Naive thymus-derived CD8-positive, alpha-beta T cell (primary cell): ENCODE measurements at regions of chr3 and their contacts with region 1.

Region 1: DNA sequence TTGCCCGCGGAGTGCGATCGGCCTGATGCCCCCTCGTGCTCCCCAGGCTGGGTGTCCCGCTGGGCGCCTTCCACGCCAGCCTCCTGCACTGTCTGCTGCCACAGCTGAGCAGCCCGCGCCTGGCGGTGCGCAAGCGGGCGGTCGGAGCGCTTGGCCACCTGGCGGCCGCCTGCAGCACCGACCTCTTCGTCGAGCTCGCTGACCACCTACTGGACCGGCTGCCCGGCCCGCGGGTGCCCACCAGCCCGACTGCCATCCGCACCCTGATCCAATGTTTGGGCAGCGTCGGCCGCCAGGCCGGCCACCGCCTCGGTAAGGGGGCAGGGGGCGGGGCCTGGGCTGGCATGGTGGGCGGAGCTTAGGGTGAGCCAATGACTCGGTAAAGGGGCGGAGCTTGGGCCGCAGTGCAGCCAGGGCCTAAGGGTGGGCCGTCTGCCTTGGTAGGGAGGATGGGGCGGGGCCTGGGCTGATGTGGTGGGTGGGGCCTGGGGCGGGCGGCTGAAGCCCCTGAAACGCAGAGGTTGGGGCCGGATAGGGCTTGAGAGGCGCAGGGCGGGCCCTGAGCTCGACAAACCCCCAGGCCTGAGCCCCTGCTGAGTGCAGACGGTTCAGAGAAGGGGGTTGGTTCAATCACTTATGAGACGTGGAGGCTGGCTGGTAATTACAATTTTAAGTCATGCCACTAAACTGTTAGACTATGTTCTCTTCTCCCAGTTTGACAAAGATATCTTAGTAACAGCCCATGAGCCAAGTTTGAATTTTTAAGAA is 13.7 kb downstream of the CAND2 start:
- DNase-seq: peak; percentile 92 to 99 (median 98)
- ATAC-seq: peak; percentile 96 to 97
- H3K4me3 Mint-ChIP-seq: peak overlapping the region; percentile 65 to 84 (median 68)
- H3K27ac Mint-ChIP-seq: peak overlapping the region in 9 of 10 donors; percentile 25 to 92 (median 90)
- H3K4me1 Mint-ChIP-seq: peaks cover 4 to 22% (median 10%) of the 10 kb centered on the region in 4 donors
- H3K27me3 Mint-ChIP-seq: no peaks in the 10 kb centered on the region

Region 2: GRCh38 chr3:12175844-12176453 is 634.2 kb before region 1 on chr3:
- POLR2A ChIA-PET with region 1: no interaction called
- DNase-seq: peak in 1 of 10 donors; percentile 6
- ATAC-seq: no peak
- H3K4me3 Mint-ChIP-seq: no peak overlapping the region
- H3K27ac Mint-ChIP-seq: no peak overlapping the region
- H3K4me1 Mint-ChIP-seq: peaks cover 0 to 2% (median 0%) of the 10 kb centered on the region in 4 donors
- H3K27me3 Mint-ChIP-seq: no peaks in the 10 kb centered on the region

Region 3: DNA sequence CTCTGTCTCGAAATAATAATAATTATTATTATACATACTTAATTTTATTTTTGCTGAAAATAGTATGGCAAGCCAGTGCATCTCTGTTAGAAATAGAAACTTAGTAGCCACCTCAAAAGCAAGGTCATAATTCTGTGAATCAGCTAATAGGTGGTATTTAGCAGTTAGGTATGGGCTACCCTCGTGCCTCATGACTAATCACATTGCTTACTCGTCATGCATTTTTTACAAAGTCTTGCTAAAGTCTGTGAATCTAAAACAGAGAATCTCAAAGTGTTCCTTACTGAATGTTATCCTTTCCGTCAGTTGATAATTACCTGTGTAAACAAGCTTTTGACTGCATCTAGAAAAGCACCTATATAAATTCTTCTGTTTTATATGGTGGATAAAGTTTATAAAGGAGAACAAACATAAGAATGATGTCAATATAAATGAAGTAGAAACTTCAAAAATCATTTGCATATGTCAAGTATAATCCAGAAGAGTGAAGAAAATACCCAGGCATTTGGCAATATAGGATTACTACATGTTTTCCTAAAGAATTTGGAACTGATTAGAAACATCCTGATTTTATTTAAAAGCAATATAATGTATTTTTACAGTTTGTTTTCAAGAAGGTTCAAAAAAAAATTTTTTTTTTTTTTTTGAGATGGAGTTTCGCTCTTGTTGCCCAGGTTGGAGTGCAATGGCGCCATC is 515.2 kb before region 1 on chr3:
- POLR2A ChIA-PET with region 1: no interaction called
- DNase-seq: no peak
- ATAC-seq: no peak
- H3K4me3 Mint-ChIP-seq: no peak overlapping the region
- H3K27ac Mint-ChIP-seq: no peak overlapping the region
- H3K4me1 Mint-ChIP-seq: no peaks in the 10 kb centered on the region
- H3K27me3 Mint-ChIP-seq: peaks cover 4 to 26% (median 7%) of the 10 kb centered on the region in 5 donors

Region 4: GRCh38 chr3:12308517-12308916 is 501.7 kb before region 1 on chr3:
- POLR2A ChIA-PET with region 1: no interaction called
- DNase-seq: no peak
- ATAC-seq: no peak
- H3K4me3 Mint-ChIP-seq: no peak overlapping the region
- H3K27ac Mint-ChIP-seq: no peak overlapping the region
- H3K4me1 Mint-ChIP-seq: no peaks in the 10 kb centered on the region
- H3K27me3 Mint-ChIP-seq: peaks cover 3 to 13% (median 9%) of the 10 kb centered on the region in 5 donors

Region 5: DNA sequence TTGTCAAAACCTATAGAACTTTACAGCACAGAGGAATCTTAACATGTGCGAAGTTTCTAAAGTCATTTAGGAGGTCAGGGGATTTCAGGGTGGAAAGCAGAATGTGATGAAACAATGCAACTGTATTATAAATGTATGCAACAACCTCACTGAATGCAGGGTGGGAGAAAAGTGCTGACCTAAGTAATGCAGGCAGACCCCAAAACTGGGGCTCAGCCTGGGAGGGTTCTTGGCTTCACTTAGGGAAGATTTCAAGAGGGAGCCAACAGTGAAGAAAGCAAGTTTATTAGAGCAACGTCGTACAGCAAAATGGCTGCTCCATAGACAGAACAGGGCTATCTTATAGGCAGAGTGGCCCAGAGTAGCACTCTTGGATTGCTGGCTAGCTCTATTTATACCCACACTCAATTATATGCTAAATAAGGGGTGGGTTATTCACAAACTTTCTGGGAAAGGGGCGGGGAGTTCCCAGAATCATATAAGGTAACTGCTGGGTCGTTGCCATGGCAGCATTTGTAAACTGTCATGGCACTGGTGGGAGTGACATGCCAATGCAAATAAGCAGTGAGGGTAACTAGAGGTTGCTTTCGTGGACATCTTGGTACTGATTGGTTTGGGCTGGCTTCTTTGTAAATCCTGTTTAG is 27.9 kb before region 1 on chr3:
- POLR2A ChIA-PET with region 1: interaction called, 10 read pairs
- DNase-seq: no peak
- ATAC-seq: no peak
- H3K4me3 Mint-ChIP-seq: no peak overlapping the region
- H3K27ac Mint-ChIP-seq: no peak overlapping the region
- H3K4me1 Mint-ChIP-seq: peaks cover 0 to 1% (median 0%) of the 10 kb centered on the region in 4 donors
- H3K27me3 Mint-ChIP-seq: peaks cover 6 to 24% (median 22%) of the 10 kb centered on the region in 5 donors

Region 6: DNA sequence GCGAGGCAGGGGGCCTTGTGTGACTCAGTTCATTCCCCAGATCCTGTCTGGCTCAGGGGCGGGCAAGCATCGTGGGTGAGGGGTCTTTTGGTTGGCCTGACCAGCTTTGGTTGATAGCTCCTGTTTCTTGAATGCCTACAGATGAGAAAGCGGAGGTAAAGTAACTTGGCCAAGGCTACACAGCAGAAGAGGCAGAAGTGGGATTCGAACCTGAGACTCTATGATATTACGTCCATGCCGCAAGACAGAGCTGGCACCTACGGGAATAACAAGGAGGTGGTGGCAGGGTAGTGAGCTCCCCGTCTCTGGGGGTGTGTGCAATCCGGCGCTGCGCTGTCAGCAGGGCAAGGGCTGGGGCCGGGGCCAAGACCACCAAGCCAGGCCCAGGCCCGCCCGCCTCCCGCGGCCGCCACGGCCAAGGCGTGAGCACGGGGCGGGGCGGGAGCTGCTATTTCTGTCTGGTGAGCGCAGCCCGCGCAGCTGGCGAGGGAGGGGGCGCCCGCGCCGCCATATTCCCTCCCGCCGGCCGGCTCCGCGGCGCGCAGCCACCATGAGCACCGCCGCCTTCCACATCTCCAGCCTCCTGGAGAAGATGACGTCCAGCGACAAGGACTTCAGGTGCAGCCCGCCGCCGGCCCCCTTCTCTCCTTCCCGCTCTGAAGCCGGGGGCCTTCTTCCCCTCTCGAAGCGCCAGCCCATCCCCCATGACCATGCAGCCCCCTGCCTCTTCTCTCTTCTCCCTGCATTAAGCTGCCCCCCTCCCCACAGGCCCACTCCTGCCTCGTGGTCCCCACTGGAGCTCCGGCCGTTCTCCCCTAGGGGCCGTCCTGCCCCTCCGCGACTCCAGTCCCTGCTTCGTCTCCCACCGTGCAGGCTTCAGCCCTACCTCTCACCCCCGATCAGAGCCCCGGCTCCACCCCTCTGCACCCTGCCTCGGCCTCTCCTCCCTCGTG is 13.8 kb before region 1 on chr3 and contains the start of gene CAND2:
- POLR2A ChIA-PET with region 1: interaction called, 15 read pairs
- DNase-seq: peak in 7 of 10 donors; percentile 12 to 60 (median 40)
- ATAC-seq: peak; percentile 82 to 95
- H3K4me3 Mint-ChIP-seq: peak within 1 kb of the TSS; percentile 84 to 94 (median 89)
- H3K27ac Mint-ChIP-seq: peak within 1 kb of the TSS; percentile 26 to 92 (median 79)
- H3K4me1 Mint-ChIP-seq: peaks cover 5 to 23% (median 13%) of the 10 kb centered on the region in 4 donors
- H3K27me3 Mint-ChIP-seq: peaks cover 0 to 12% (median 3%) of the 10 kb centered on the region in 5 donors
- polyA plus RNA-seq, gene CAND2: 1.8 to 3.6 (median 2.6) TPM